Right ventricle myocardium inferior (tissue), 1 donor: ENCODE measurements at regions of chr9 and their contacts with region 1.

Region 1: DNA sequence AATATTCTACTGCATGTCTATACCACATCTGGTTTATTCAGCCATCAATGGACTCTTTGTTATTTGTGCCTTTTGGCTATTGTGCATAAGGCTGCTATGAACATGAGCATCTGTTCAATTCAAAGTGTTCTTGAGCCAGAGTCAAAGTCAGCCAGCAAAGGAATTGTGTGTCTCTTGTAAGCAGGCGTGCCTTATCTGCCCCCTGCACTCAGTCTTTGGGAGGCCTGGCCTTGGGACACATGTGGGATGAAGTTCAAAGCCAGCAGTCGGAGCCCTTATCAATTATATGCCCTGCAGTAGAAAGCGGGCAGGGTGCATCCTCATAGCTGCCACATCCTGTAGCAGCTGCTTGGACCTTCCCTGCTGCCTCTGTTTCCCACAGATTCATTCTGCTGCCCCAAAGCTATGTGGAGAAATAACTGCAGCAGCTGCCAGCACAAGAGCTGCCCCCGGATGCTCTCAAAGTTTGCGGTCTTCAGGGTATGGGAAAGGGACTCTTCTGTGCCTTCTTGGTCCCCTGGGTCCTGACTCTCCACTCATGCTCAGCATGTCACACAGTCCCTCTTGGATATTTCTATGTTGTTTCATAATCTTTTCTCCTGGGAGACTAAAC is 36.0 kb downstream of the STOM start:
- DNase-seq: no peak
- ATAC-seq: peak; percentile 49

Region 2: GRCh38 chr9:121350993-121351561 is 17.0 kb after region 1 on chr9:
- intact Hi-C with region 1: loop called (anchors 2 kb)
- DNase-seq: no peak
- ATAC-seq: peak; percentile 58

Region 3: DNA sequence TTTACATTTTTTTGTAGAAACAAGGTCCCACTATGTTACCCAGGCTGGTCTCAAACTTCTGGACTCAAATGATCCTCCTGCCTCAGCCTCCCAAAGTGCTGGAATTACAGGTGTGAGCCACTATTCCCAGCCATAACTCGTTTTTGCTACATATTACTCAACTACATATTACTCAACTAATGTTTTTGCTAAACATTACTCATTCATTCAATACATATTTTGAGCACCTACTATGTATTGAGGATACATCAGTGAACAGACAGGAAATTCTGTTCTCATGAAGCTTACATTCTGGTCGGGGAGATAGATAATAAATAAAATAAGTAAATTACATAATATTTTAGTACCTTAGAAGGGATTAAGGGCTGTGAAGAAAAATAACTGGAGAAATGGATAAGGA is 70.8 kb after region 1 on chr9:
- intact Hi-C with region 1: no loop called
- DNase-seq: no peak
- ATAC-seq: no peak